Motor neuron (in vitro differentiated cells): ENCODE measurements at regions of chr21 and their contacts with region 1.

Region 1: DNA sequence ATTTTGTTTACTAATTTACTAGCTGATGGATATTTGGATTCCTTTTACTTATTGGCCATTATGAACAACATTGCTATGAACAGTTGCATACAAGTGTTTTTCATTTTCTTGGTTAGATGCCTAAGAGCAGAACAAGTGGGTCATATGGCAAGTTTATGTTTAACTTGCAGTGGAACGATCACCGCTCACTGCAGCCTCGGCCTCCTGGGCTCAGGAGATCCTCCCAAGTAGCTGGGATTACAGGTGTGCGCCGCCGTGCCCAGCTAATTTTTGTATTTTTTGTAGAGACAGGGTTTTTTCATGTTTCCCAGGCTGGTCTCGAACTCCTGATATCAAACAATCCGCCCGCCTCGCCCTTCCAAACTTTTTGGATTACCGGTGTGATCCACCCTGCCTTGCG is 820.5 kb upstream of the TMPRSS15 start:
- ATAC-seq: no peak
- H3K4me3 ChIP-seq: no peak overlapping the region
- H3K27ac ChIP-seq: no peak overlapping the region
- H3K4me1 ChIP-seq: peaks cover 5 to 14% of the 10 kb centered on the region in 2 donors

Region 2: DNA sequence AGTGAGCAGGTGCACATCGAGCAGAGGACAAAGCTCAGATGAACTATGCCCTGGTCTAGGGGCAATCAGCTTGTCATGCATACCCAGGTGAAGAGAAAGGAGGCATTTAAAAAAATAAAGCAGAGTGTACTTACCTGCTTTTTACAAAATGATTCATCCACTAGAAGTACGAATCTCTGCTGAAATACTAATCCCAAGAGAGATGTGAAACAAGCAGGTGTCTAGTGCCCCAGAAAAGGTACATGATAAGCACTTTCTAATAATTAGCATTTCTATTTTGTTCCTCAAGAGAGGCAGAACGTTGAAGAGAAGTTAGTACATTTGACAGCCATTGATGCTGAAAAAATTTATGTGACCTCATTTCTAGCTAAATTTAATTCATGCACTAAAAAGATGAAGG is 948.3 kb before region 1 on chr21:
- in situ Hi-C with region 1: no loop called
- ATAC-seq: no peak
- H3K4me3 ChIP-seq: no peak overlapping the region
- H3K27ac ChIP-seq: no peak overlapping the region
- H3K4me1 ChIP-seq: peaks cover 0 to 30% of the 10 kb centered on the region in 2 donors

Region 3: DNA sequence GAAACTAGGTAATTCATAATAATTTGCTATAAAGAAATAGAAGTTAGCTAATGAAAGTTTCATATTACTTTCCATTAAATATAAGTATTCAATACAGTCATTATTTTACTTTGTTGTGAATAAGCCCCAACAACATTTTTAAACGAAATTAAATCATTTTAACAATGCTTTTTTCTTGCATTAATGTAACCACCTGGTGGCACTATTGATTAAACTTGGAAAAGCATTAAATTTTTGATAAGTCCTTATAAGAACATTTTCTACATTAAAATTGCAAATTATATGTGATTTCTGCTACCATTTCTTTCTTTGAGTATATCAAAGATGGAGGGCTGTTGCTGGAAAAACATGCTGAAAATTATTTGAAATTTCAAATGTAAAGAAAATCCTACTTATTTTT is 98.3 kb after region 1 on chr21:
- in situ Hi-C with region 1: loop called in 1 of 9 experiments (anchors 25 kb)
- ATAC-seq: no peak
- H3K4me3 ChIP-seq: no peak overlapping the region
- H3K27ac ChIP-seq: no peak overlapping the region
- H3K4me1 ChIP-seq: no peaks in the 10 kb centered on the region